ENCODE measurements at regions of chr3 and their contacts with region 1.

Region 1: DNA sequence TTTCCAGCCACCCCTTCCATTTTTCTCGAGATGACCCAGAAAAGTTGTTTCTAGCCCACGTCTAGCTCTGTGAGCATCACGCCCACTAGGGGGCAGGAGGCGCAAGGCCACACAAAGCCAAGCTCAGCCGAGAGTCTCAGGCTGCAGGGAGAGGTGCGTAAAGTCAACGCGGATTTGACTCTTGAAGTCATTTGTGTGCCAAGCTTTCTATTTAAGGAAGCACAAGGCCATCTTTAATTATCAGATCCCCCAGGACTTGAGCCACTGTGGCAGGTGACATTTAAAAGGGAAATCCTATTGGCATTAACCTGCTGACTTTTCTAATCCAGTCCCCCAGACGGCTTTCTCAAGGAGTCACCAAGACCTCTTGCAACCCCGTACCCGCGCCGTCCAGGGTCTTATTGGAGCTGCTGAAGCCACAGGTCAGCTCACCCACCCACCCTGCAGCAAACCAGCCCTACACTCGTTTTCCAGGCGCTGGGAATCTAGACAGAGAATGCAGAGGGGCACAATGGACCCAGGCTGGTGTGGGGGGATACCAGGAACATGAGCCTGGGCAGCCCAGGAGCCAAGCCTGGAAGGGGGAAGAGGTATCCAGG is 62.1 kb downstream of the CAPN7 start:
- DNase-seq: peak; percentile 90
- H3K4me3 ChIP-seq: no peak overlapping the region
- H3K27ac ChIP-seq: no peak overlapping the region
- H3K4me1 ChIP-seq: peaks cover 18% of the 10 kb centered on the region
- CTCF ChIP-seq: peak; percentile 99

Region 2: DNA sequence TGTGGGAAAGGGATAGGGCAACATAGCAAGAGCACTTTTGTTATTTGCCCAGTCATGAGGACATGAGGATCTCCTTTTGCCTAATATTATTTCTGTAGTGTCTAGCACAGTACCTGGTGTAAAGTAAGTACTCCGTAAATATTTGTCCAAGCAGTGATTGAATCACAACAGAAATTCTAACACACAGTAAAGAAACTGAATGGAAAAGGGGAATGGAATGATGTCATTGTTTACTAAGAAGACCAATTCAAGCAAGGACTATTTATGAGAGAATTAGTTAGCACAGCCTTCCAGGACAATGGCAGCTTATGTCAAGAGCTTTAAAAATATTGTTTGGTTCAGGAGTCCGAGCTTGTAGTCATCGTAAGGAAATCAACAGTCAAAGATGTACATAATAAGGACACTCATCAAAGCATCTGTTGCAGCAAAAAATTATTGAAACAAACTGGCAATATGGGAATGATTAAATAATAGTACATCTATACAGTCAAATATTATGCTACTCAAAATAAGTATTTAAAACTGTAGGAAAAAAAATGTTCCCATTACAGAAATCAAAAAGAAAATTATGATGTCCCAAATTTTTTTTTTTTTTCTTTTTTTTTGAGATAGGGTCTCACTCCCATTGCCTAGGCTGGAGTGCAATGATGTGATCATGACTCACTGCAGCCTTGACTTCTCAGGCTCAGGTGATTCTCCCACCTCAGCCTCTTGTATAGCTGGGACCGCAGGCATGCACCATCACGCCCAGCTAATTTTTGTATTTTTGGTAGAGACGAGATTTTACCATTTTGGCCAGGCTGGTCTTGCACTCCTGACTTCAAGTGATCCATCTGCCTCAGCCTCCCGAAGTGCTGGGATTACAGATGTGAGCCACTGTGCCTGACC is 44.2 kb before region 1 on chr3:
- CTCF ChIA-PET with region 1: interaction called, 10 read pairs
- POLR2A ChIA-PET with region 1: no interaction called
- intact Hi-C with region 1: no loop called
- DNase-seq: no peak
- H3K4me3 ChIP-seq: no peak overlapping the region
- H3K27ac ChIP-seq: no peak overlapping the region
- H3K4me1 ChIP-seq: no peaks in the 10 kb centered on the region
- CTCF ChIP-seq: no peak

Region 3: GRCh38 chr3:15377961-15378791 is 110.0 kb after region 1 on chr3:
- CTCF ChIA-PET with region 1: interaction called, 7 read pairs
- POLR2A ChIA-PET with region 1: interaction called, 8 read pairs
- intact Hi-C with region 1: loop called (anchors 1 kb)
- DNase-seq: peak; percentile 97
- H3K4me3 ChIP-seq: no peak overlapping the region
- H3K27ac ChIP-seq: peak overlapping the region; percentile 28
- H3K4me1 ChIP-seq: peaks cover 51% of the 10 kb centered on the region
- CTCF ChIP-seq: peak; percentile 96

Region 4: DNA sequence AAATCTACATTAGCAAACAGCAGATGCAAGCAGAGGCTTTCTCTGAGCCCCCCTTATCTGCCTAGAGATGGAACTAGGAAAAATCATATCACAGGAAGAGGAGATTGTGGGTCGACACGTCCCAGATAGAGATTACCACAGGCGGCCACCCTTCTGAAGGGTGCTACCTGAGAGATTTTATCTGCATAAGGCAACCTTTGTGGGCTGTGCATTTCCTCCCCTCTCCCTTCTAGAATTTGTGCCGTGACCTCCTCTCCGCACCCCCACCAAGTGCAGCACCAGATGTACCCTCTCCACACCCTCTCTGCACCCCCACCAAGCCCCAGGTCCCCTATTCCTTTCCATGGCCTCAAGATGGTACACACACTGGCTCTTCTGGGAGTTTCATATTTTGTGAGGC is 131.8 kb after region 1 on chr3:
- CTCF ChIA-PET with region 1: interaction called, 13 read pairs
- POLR2A ChIA-PET with region 1: interaction called, 6 read pairs
- intact Hi-C with region 1: loop called (anchors 1 kb)
- DNase-seq: no peak
- H3K4me3 ChIP-seq: no peak overlapping the region
- H3K27ac ChIP-seq: no peak overlapping the region
- H3K4me1 ChIP-seq: peaks cover 11% of the 10 kb centered on the region
- CTCF ChIP-seq: no peak

Region 5: DNA sequence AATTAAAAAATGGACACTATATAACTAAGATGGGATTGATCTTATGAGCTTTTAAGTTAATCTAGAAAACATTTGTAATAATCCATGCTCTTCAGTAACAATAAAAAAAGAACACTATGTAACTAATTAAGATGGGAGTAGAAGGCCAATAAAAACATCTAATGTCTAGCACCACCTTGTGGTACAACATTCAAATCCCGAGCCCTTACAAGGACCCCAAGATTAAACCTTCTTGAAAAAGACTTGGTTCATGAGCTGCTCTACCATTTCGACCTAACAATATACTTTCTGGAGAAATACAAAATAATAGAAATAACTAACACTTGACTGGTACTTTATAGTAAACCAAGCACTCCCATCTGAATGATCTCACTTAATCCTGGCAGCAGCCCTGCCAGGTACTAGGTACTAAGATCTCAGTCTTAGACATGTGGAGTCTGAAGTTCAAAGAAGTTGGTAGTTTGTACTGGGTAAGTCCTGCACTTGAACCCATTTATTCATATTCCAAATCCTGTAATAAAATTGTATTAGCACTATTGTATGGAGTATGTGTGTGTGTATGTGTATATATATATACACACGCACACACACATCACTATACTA is 137.4 kb after region 1 on chr3:
- CTCF ChIA-PET with region 1: interaction called, 13 read pairs
- POLR2A ChIA-PET with region 1: interaction called, 6 read pairs
- intact Hi-C with region 1: loop called (anchors 1 kb)
- DNase-seq: peak; percentile 82
- H3K4me3 ChIP-seq: no peak overlapping the region
- H3K27ac ChIP-seq: no peak overlapping the region
- H3K4me1 ChIP-seq: no peaks in the 10 kb centered on the region
- CTCF ChIP-seq: peak; percentile 95

Region 6: DNA sequence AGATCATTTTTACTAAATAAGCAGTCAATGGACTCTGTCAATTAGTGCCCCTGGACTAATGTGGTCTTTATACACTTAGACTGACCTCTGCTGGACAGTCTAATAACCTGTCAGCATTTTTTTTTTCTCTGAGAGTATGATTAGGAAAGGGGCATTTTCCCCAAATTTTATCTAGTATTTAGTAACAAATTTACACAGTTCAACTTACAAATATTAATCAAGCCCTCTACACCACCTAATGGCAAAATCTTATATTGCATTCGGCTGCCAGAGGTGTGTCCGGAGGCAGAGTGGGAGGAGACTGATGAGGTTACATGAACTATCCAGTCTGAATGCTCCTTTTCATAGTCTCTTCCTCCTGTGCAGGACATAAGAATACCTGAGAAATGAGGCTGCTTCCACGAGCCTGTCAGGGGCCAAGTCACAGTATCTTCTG is 289.4 kb after region 1 on chr3:
- CTCF ChIA-PET with region 1: no interaction called
- POLR2A ChIA-PET with region 1: interaction called, 3 read pairs
- intact Hi-C with region 1: loop called (anchors 2 kb)
- DNase-seq: peak; percentile 70
- H3K4me3 ChIP-seq: no peak overlapping the region
- H3K27ac ChIP-seq: no peak overlapping the region
- H3K4me1 ChIP-seq: peaks cover 17% of the 10 kb centered on the region
- CTCF ChIP-seq: peak; percentile 87